ENCODE measurements at regions of chr17 and their contacts with region 1.

Region 1: GRCh38 chr17:39980351-39981206 is at the start of gene PSMD3:
- DNase-seq: peak; percentile 98 to 99
- H3K4me3 ChIP-seq: peak within 1 kb of the TSS; percentile 79 to 99 (median 90)
- H3K27ac ChIP-seq: peak within 1 kb of the TSS; percentile 83
- H3K4me1 ChIP-seq: peaks cover 0 to 6% (median 3%) of the 10 kb centered on the region in 4 experiments; a peak in 5 of 7 replicates
- H3K27me3 ChIP-seq: no peaks in the 10 kb centered on the region
- CTCF ChIP-seq: peak in 2 of 3 experiments; percentile 54 to 61; a peak in 3 of 4 replicates
- EP300 ChIP-seq: peak in 1 of 2 experiments; percentile 91; a peak in 1 of 3 replicates
- POLR2A ChIP-seq: peak; percentile 45 to 92
- RAD21 ChIP-seq: peak; percentile 61 to 69
- total RNA-seq, gene PSMD3: 198 TPM in 2 replicates

Region 2: GRCh38 chr17:39753556-39754160 is 226.9 kb before region 1 on chr17:
- CTCF ChIA-PET with region 1: no interaction called
- POLR2A ChIA-PET with region 1: no interaction called
- DNase-seq: peak in 1 of 2 experiments; percentile 70
- H3K4me3 ChIP-seq: peak overlapping the region; percentile 30 to 82 (median 74)
- H3K27ac ChIP-seq: no peak overlapping the region
- H3K4me1 ChIP-seq: peaks cover 9 to 29% (median 21%) of the 10 kb centered on the region in 4 experiments
- H3K27me3 ChIP-seq: peaks cover 0 to 3% (median 2%) of the 10 kb centered on the region in 4 experiments; a peak in 2 of 7 replicates
- CTCF ChIP-seq: peak in 1 of 3 experiments; percentile 2; a peak in 1 of 4 replicates
- EP300 ChIP-seq: no peak
- POLR2A ChIP-seq: 0 out of 3 replicates have a peak, but pooled peaks of 1 of the 2 experiments have one; percentile 20
- RAD21 ChIP-seq: no peak

Region 3: DNA sequence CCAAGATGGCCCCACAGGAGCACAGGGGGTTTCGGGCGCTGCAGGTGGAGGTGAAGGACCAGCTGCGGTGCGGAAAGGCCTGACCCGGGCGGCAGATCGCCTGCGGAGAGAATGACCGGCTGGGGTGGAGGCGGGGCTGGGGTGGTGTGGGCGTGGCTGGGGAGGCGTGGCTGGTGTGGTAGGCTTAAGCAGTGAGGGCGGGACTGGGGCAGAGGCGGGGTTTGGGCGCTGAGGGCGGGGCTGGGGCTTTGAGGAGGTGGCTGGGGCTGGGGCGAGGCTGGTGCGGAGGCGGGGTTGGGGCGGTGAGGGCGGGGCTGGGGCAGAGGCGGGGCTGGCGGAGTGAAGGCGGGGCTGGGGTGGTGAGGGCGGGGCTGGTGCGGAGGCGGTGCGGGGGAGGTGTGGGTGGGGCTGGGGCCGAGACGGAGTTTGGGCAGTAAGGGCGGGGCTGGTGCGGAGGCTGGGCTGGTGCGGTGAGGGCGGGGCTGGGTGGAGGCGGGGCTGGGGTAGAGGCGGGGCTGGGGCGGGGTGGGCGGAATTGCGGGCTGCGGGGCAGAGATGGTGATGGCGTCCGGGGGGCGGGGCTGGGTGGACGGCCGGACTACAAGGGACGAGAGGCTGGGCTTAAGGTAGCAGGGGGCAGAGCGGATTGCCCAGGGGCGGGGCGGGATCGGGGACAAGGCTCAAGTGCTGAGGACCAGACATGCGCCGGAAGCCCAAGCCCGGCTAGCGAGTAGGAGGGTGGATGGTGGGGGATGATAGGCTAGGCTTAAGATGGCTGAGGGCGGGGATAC is 27.7 kb before region 1 on chr17:
- CTCF ChIA-PET with region 1: interaction called, 96 read pairs
- POLR2A ChIA-PET with region 1: interaction called, 7 read pairs
- DNase-seq: peak; percentile 97 to 100
- H3K4me3 ChIP-seq: peak overlapping the region; percentile 33 to 66 (median 49); a peak in 7 of 8 replicates
- H3K27ac ChIP-seq: no peak overlapping the region
- H3K4me1 ChIP-seq: peaks cover 0 to 13% (median 7%) of the 10 kb centered on the region in 4 experiments; a peak in 6 of 7 replicates
- H3K27me3 ChIP-seq: peaks cover 0 to 5% (median 2%) of the 10 kb centered on the region in 4 experiments; a peak in 3 of 7 replicates
- CTCF ChIP-seq: no peak
- EP300 ChIP-seq: no peak
- POLR2A ChIP-seq: no peak; a peak in 1 of 3 replicates
- RAD21 ChIP-seq: no peak

Region 4: DNA sequence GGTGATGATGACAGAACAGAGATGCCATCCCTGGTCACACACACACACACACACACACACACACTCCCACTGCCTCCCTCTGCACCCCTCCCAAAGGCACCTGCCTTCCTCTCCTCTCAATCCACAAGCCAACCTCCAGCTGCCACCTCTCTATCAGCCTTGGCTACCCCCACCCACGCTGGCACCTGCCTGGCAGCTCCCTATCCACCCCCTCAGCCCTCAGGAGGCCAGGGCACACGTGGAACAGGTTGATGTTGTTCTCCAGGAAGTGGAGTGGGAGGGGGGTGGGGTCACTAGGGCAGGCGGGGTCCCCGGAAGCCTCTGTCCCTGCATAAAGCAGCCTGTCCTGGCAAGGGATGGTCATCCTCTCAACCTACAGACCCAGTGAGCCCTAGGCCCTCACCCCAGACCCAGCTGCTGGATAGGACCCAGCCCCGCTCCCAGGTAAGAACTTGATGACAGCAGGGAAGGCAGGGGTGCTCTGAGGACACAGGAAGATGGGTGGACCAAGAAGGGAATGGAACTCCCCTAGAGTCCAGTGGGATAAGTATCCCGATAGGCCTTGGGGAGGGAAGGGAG is 17.8 kb before region 1 on chr17 and contains the start of gene GSDMA:
- CTCF ChIA-PET with region 1: interaction called, 96 read pairs
- POLR2A ChIA-PET with region 1: interaction called, 7 read pairs
- DNase-seq: no peak
- H3K4me3 ChIP-seq: no peak within 1 kb of the TSS
- H3K27ac ChIP-seq: no peak within 1 kb of the TSS
- H3K4me1 ChIP-seq: peaks cover 0 to 3% (median 1%) of the 10 kb centered on the region in 4 experiments; a peak in 2 of 7 replicates
- H3K27me3 ChIP-seq: no peaks in the 10 kb centered on the region; a peak in 1 of 7 replicates
- CTCF ChIP-seq: no peak
- EP300 ChIP-seq: no peak
- POLR2A ChIP-seq: no peak
- RAD21 ChIP-seq: no peak
- total RNA-seq, gene GSDMA: not detected in 2 replicates

Measured in H1 (cell line).